A549 (cell line): ENCODE measurements at regions of chr9 and their contacts with region 1.

Region 1: DNA sequence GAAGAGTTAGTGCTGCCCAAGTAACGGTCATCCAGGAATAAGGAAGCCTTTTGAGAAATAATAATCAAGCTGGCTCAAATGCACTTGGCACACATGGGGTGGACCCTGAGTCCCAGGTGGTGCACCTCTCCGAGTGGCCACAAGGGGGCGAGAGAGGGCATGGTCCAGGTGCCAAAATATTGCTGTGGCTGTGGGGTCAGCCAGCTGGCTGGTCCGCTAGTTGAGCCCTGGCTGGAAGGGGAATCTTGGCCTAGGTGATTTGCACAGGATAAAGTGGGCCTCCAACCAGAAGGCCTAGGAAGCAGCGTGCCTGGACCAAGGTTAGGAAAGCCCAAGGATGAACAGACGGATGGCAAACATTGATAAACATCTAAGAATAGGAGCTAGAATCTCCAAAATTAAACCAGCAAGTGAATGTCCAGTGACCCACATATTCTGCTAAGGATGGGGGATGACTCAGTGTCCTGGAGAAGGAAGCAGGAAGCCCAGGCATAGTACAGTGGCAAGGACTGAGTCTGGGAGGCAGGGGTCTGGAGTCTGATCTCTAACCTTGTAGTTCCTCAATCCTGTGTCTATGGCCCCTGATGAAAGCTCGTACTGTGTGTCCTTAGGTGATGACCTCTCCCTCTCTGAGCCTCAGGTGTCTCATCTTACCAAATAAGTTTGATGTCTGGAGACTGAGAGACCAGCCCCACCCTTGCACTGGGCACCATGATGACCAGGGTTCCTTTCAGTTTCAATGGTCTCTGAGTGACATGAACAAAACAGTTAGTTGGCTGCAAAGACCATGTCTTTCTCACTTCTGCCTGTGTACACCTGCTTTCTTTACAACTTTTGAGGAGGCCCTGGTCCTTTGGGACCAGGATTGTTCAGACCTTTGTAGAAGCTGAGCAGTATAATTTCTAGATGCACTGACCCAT is 19.2 kb upstream of the SHB start:
- DNase-seq: peak; percentile 49 to 78
- ATAC-seq: peak; percentile 73 to 90
- H3K4me3 ChIP-seq: no peak overlapping the region
- H3K27ac ChIP-seq: no peak overlapping the region
- H3K4me1 ChIP-seq: no peaks in the 10 kb centered on the region
- CTCF ChIP-seq: peak; percentile 82
- EP300 ChIP-seq: no peak
- POLR2A ChIP-seq: no peak
- RAD21 ChIP-seq: peak; percentile 79 to 83

Region 2: DNA sequence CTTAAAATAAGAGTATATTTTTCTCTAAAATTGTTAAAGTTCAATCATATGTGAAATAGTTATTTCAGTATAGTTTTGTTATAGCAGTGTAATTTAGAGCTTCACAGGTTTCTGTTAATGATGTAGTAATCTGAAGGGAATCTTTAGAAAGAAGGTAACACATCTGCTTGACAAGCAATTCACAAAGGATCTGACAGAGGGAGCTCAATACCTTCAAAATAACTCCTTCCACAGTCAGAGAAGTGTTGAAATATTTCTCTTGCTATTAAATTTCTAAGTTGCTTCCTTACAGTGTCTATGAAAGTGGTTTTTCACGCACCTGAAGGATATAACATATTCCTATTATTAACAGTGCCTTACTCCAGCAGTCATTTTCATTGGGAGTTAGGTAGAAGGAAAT is 229.2 kb before region 1 on chr9:
- CTCF ChIA-PET with region 1: no interaction called
- POLR2A ChIA-PET with region 1: no interaction called
- DNase-seq: peak; percentile 10 to 25
- ATAC-seq: peak; percentile 54 to 73; a peak in 4 of 6 replicates
- H3K4me3 ChIP-seq: no peak overlapping the region
- H3K27ac ChIP-seq: no peak overlapping the region
- H3K4me1 ChIP-seq: no peaks in the 10 kb centered on the region
- CTCF ChIP-seq: peak; percentile 30; the same call in 2 of the 3 replicates
- EP300 ChIP-seq: no peak
- POLR2A ChIP-seq: no peak
- RAD21 ChIP-seq: peak; percentile 33 to 45; a peak in 3 of 5 replicates

Region 3: GRCh38 chr9:38026840-38027527 is 61.3 kb before region 1 on chr9:
- CTCF ChIA-PET with region 1: no interaction called
- POLR2A ChIA-PET with region 1: no interaction called
- DNase-seq: no peak
- ATAC-seq: peak in 1 of 2 experiments; percentile 6; a peak in 3 of 6 replicates
- H3K4me3 ChIP-seq: no peak overlapping the region
- H3K27ac ChIP-seq: peak overlapping the region; percentile 84 to 97
- H3K4me1 ChIP-seq: peaks cover 95% of the 10 kb centered on the region
- CTCF ChIP-seq: no peak
- EP300 ChIP-seq: no peak
- POLR2A ChIP-seq: no peak
- RAD21 ChIP-seq: no peak

Region 4: DNA sequence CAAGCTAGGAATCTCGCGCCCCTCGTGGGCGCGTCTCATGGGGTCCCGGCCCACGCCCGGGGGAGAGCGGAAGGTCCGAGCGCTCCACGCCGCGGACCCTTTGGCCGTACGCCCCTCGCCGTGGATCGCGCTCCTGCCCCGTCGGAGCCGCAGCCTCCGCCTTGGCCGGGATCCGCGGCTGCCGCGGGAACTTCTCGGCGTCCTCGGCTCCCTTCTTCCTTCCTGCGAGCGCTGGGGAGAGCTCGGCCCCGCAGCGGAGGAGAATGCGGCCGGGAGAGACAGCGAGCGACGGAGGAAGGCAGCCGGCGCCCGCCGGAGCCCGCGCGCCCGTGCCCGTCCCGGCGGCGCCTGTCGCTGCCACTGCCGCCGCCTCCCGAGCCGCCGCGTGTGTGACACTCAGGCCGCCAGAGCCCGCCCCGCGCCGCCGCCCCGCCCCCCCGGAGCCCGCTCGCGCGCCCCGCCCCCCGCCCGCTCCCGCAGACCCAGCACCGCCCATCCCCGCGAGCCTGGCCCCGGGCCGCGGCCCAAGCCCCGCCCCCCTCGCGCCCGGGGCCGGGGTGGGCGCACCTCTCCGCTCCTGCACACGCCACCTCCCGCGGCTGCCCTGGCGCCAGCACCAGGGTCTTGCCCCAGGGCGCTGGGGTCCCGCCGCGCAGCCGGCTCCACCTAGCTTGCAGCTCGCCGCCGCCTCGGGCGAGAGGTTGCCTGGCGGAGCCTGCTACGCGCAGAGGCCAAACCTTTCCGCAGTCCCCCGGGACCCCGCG is 19.2 kb before region 1 on chr9 and contains the start of gene SHB:
- CTCF ChIA-PET with region 1: interaction called, 26 read pairs
- POLR2A ChIA-PET with region 1: no interaction called
- DNase-seq: peak; percentile 71 to 83
- ATAC-seq: peak; percentile 64 to 65
- H3K4me3 ChIP-seq: peak within 1 kb of the TSS; percentile 93
- H3K27ac ChIP-seq: peak within 1 kb of the TSS; percentile 95 to 100
- H3K4me1 ChIP-seq: peaks cover 37% of the 10 kb centered on the region
- CTCF ChIP-seq: peak; percentile 22; the same call in 2 of the 3 replicates
- EP300 ChIP-seq: no peak
- POLR2A ChIP-seq: peak; percentile 87
- RAD21 ChIP-seq: no peak; a peak in 3 of 5 replicates
- polyA plus RNA-seq, gene SHB: 15.4 and 16.4 TPM in 2 replicates

Region 5: GRCh38 chr9:38154501-38155421 is 66.5 kb after region 1 on chr9:
- CTCF ChIA-PET with region 1: interaction called, 24 read pairs
- POLR2A ChIA-PET with region 1: no interaction called
- DNase-seq: no peak
- ATAC-seq: peak in 1 of 2 experiments; percentile 43; a peak in 3 of 6 replicates
- H3K4me3 ChIP-seq: no peak overlapping the region
- H3K27ac ChIP-seq: no peak overlapping the region
- H3K4me1 ChIP-seq: no peaks in the 10 kb centered on the region
- CTCF ChIP-seq: no peak
- EP300 ChIP-seq: no peak
- POLR2A ChIP-seq: no peak
- RAD21 ChIP-seq: no peak

Region 6: DNA sequence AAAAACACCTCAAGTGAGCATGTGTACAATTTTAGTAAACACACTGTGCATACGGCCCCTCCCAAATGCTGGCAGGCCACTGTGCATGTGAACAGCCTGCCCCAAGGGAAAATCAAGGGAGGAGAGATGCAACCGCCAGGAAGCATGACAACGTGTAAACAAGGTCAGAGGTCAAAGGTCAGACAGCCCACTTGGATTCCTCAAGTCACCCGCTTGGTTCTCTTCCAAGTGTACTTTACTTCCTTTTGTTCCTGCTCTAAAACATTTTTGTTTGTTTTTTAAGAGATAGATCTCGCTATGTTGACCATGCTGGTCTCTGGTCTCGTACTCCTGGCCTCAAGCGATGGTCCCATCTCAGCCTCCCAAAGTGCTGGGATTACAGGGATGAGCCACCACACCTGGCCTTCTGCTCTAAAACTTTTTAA is 107.5 kb after region 1 on chr9:
- CTCF ChIA-PET with region 1: no interaction called
- POLR2A ChIA-PET with region 1: no interaction called
- DNase-seq: peak in 1 of 2 experiments; percentile 41
- ATAC-seq: no peak
- H3K4me3 ChIP-seq: no peak overlapping the region
- H3K27ac ChIP-seq: no peak overlapping the region
- H3K4me1 ChIP-seq: peaks cover 5% of the 10 kb centered on the region; the same call in 1 of the 3 replicates
- CTCF ChIP-seq: no peak
- EP300 ChIP-seq: no peak
- POLR2A ChIP-seq: no peak
- RAD21 ChIP-seq: no peak

Region 7: DNA sequence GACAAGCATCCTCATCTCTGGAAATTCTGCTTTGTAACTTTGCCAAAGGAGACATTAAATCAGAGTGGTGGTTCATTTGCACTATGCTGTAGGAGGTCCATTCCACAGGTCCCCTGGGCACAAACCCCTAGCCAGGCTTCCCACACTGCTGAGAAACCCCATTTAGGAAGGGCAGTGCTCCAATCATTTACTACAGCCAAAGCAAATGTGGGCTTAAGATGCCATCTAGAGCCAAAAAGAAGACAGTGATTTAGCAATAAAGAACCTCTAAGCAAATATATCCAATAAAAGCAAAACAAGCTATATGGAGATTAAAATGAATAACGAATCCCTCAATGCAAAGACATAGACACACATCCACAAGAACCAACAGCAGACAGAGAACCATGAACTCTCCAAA is 175.3 kb after region 1 on chr9:
- CTCF ChIA-PET with region 1: interaction called, 29 read pairs
- POLR2A ChIA-PET with region 1: no interaction called
- DNase-seq: peak in 1 of 2 experiments; percentile 49
- ATAC-seq: peak; percentile 56 to 64; a peak in 5 of 6 replicates
- H3K4me3 ChIP-seq: no peak overlapping the region
- H3K27ac ChIP-seq: peak overlapping the region in 1 of 2 experiments; percentile 14; a peak in 1 of 6 replicates
- H3K4me1 ChIP-seq: no peaks in the 10 kb centered on the region
- CTCF ChIP-seq: peak; percentile 56
- EP300 ChIP-seq: no peak
- POLR2A ChIP-seq: no peak
- RAD21 ChIP-seq: peak; percentile 80 to 82

Region 8: GRCh38 chr9:38362852-38363593 is 274.8 kb after region 1 on chr9:
- CTCF ChIA-PET with region 1: interaction called, 18 read pairs
- POLR2A ChIA-PET with region 1: no interaction called
- DNase-seq: peak; percentile 60 to 72
- ATAC-seq: peak; percentile 81 to 87
- H3K4me3 ChIP-seq: no peak overlapping the region
- H3K27ac ChIP-seq: peak overlapping the region in 1 of 2 experiments; percentile 46; a peak in 2 of 6 replicates
- H3K4me1 ChIP-seq: 0 out of 3 replicates have a peak, but pooled peaks cover 4% of the 10 kb centered on the region
- CTCF ChIP-seq: peak; percentile 84
- EP300 ChIP-seq: no peak
- POLR2A ChIP-seq: no peak
- RAD21 ChIP-seq: peak; percentile 91 to 95